ENCODE measurements at regions of chr1 and their contacts with region 1.

Region 1: DNA sequence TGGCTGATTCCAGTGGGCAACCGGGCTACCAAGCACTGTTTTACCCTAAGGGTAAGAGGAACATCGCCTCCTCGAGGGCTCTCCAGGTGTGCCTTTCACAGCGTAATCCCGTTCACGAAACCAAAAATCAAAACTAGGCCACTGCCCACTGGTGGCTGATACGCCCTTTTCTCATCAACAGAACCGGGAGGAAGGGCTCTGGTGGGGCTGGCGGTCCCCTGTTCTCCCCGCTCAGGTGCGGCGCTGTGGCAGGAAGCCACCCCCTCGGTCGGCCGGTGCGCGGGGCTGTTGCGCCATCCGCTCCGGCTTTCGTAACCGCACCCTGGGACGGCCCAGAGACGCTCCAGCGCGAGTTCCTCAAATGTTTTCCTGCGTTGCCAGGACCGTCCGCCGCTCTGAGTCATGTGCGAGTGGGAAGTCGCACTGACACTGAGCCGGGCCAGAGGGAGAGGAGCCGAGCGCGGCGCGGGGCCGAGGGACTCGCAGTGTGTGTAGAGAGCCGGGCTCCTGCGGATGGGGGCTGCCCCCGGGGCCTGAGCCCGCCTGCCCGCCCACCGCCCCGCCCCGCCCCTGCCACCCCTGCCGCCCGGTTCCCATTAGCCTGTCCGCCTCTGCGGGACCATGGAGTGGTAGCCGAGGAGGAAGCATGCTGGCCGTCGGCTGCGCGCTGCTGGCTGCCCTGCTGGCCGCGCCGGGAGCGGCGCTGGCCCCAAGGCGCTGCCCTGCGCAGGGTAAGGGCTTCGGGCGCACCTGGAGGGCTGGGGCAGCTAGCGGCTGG is at the start of gene IL6R:
- DNase-seq: peak; percentile 63 to 83 (median 77)
- ATAC-seq: peak; percentile 70
- H3K4me3 ChIP-seq: peak within 1 kb of the TSS; percentile 72
- H3K4me3 Mint-ChIP-seq: peak within 1 kb of the TSS; percentile 88 to 98 (median 96)
- H3K27ac ChIP-seq: peak within 1 kb of the TSS; percentile 75
- H3K27ac Mint-ChIP-seq: peak within 1 kb of the TSS; percentile 77 to 99 (median 95)
- H3K4me1 ChIP-seq: peaks cover 51 to 68% of the 10 kb centered on the region in 2 donors
- H3K4me1 Mint-ChIP-seq: peaks cover 50 to 75% (median 68%) of the 10 kb centered on the region in 7 donors
- H3K27me3 ChIP-seq: no peaks in the 10 kb centered on the region
- H3K27me3 Mint-ChIP-seq: peaks cover 0 to 4% (median 0%) of the 10 kb centered on the region in 5 donors
- total RNA-seq, gene IL6R: 5.2 to 91.6 (median 85.6) TPM

Region 2: DNA sequence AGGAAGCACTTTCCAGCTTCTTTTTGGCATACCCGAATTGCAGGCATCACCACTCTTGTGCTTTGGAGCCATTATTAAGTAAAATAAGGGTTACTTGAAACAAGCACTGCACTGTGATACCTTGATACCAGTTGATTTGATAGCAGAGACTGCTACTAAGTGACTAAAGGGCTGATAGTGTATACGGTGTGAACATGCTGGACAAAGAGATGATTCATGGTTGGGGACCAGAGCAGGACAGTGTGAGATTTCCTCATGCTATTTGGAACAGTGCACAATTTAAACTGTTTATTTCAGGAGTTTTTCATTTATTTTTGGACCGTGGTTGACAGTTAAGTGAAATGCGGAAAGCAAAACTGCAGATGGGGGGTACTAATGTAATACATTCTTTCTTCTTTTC is 404.8 kb before region 1 on chr1:
- CTCF ChIA-PET with region 1: no interaction called
- POLR2A ChIA-PET with region 1: no interaction called
- intact Hi-C with region 1: no loop called
- DNase-seq: no peak
- ATAC-seq: no peak
- H3K4me3 ChIP-seq: no peak overlapping the region
- H3K4me3 Mint-ChIP-seq: no peak overlapping the region
- H3K27ac ChIP-seq: no peak overlapping the region
- H3K27ac Mint-ChIP-seq: no peak overlapping the region
- H3K4me1 ChIP-seq: no peaks in the 10 kb centered on the region
- H3K4me1 Mint-ChIP-seq: peaks cover 0 to 4% (median 3%) of the 10 kb centered on the region in 7 donors
- H3K27me3 ChIP-seq: no peaks in the 10 kb centered on the region
- H3K27me3 Mint-ChIP-seq: no peaks in the 10 kb centered on the region

Region 3: GRCh38 chr1:154335025-154335714 is 70.0 kb before region 1 on chr1:
- CTCF ChIA-PET with region 1: interaction called, 21 read pairs
- POLR2A ChIA-PET with region 1: interaction called, 7 read pairs
- intact Hi-C with region 1: no loop called
- DNase-seq: peak; percentile 74 to 91 (median 87)
- ATAC-seq: peak; percentile 99
- H3K4me3 ChIP-seq: peak overlapping the region; percentile 23
- H3K4me3 Mint-ChIP-seq: peak overlapping the region; percentile 60 to 85 (median 72)
- H3K27ac ChIP-seq: peak overlapping the region; percentile 68
- H3K27ac Mint-ChIP-seq: peak overlapping the region; percentile 87 to 97 (median 95)
- H3K4me1 ChIP-seq: peaks cover 73% of the 10 kb centered on the region in 2 donors
- H3K4me1 Mint-ChIP-seq: peaks cover 50 to 88% (median 77%) of the 10 kb centered on the region in 7 donors
- H3K27me3 ChIP-seq: no peaks in the 10 kb centered on the region
- H3K27me3 Mint-ChIP-seq: no peaks in the 10 kb centered on the region

Region 4: DNA sequence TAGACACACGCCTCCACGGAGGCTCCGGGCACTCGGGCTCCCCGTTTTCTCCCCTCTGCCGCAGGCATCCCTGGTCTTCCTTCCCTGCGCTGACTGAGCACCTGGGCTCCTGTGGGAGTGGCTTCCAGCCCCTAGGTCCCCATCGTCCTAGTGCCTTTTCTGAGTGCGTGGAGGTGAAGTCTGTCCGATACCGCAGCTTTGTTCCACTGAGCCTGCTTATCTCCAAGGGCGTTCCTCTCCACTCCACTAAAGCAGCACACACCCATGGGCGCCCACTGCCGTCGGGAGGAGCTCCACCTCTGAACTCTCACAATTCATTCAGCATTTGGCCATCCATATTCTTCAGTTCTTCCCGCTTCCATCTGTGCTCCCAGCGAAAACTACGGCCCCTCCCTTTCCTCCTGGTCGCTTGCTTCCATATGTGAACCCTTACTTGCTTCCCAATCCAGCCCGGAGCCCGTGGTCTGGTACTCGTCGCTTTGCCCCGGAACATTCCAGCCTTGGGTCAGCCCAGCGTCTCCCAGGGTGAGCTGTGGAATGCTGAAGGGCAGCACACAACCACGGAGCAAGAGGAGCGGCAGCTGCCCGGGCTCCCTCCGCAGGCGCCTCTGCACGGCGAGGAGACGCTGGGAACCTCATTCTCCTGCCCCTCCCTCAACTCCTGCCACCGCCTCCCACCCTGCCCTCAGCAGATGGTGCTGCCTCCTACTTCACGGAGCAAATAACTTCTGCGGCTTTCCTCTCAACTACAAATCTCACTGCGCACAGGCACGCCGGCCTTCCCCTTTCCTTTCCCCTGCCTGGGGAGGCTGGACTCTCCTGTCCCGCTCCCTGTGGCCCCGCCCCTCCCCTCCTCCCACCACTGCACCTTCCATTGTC is 52.4 kb before region 1 on chr1:
- CTCF ChIA-PET with region 1: interaction called, 28 read pairs
- POLR2A ChIA-PET with region 1: interaction called, 26 read pairs
- intact Hi-C with region 1: loop called (anchors 1 to 5 kb)
- DNase-seq: peak in 8 of 9 donors; percentile 45 to 58 (median 52)
- ATAC-seq: peak; percentile 84
- H3K4me3 ChIP-seq: peak overlapping the region; percentile 79
- H3K4me3 Mint-ChIP-seq: peak overlapping the region; percentile 76 to 98 (median 91)
- H3K27ac ChIP-seq: peak overlapping the region; percentile 74
- H3K27ac Mint-ChIP-seq: peak overlapping the region; percentile 66 to 97 (median 88)
- H3K4me1 ChIP-seq: peaks cover 13 to 32% of the 10 kb centered on the region in 2 donors
- H3K4me1 Mint-ChIP-seq: peaks cover 29 to 64% (median 48%) of the 10 kb centered on the region in 7 donors
- H3K27me3 ChIP-seq: no peaks in the 10 kb centered on the region
- H3K27me3 Mint-ChIP-seq: peaks cover 0 to 2% (median 0%) of the 10 kb centered on the region in 5 donors

Region 5: GRCh38 chr1:154419620-154420571 is 14.7 kb after region 1 on chr1:
- CTCF ChIA-PET with region 1: interaction called, 13 read pairs
- POLR2A ChIA-PET with region 1: interaction called, 159 read pairs
- intact Hi-C with region 1: loop called in 1 of 2 experiments (anchors 1 kb)
- DNase-seq: peak in 7 of 9 donors; percentile 40 to 66 (median 55)
- ATAC-seq: peak; percentile 84
- H3K4me3 ChIP-seq: peak overlapping the region; percentile 40
- H3K4me3 Mint-ChIP-seq: peak overlapping the region; percentile 70 to 86 (median 78)
- H3K27ac ChIP-seq: peak overlapping the region; percentile 76
- H3K27ac Mint-ChIP-seq: peak overlapping the region; percentile 76 to 97 (median 93)
- H3K4me1 ChIP-seq: peaks cover 0 to 78% of the 10 kb centered on the region in 2 donors
- H3K4me1 Mint-ChIP-seq: peaks cover 33 to 99% (median 89%) of the 10 kb centered on the region in 7 donors
- H3K27me3 ChIP-seq: no peaks in the 10 kb centered on the region
- H3K27me3 Mint-ChIP-seq: no peaks in the 10 kb centered on the region

Region 6: DNA sequence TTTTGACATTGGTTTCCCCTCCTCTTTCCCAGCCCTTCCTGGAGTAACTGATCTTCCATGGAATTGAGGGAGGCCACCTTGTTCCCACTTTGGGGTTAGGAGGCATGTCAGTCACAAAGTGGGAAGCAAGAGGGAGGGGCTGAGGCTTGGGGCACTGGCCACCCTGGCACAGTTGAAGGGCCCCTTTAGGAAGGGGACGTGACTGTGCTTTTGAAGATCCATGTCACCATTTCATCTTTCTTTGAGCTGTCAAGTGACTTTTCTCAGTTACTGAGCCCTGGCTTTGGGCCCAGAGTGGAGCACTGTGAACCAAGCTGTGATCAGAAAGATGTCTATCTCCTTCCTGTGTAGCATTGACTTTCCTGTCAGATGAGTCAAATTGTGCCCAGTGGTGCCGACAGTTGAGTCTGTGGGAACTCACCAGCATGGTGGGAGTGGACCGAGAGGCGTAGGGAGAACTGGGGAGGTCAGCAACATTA is 58.4 kb after region 1 on chr1:
- CTCF ChIA-PET with region 1: interaction called, 28 read pairs
- POLR2A ChIA-PET with region 1: interaction called, 84 read pairs
- intact Hi-C with region 1: loop called in 1 of 2 experiments (anchors 1 kb)
- DNase-seq: peak in 8 of 9 donors; percentile 50 to 79 (median 70)
- ATAC-seq: peak; percentile 82
- H3K4me3 ChIP-seq: no peak overlapping the region
- H3K4me3 Mint-ChIP-seq: peak overlapping the region; percentile 58 to 96 (median 80)
- H3K27ac ChIP-seq: peak overlapping the region; percentile 78
- H3K27ac Mint-ChIP-seq: peak overlapping the region; percentile 86 to 96 (median 94)
- H3K4me1 ChIP-seq: peaks cover 38 to 78% of the 10 kb centered on the region in 2 donors
- H3K4me1 Mint-ChIP-seq: peaks cover 58 to 94% (median 81%) of the 10 kb centered on the region in 7 donors
- H3K27me3 ChIP-seq: no peaks in the 10 kb centered on the region
- H3K27me3 Mint-ChIP-seq: no peaks in the 10 kb centered on the region

Region 7: GRCh38 chr1:154955718-154956543 is 550.8 kb after region 1 on chr1 and contains the start of gene PBXIP1:
- CTCF ChIA-PET with region 1: no interaction called
- POLR2A ChIA-PET with region 1: interaction called, 5 read pairs
- intact Hi-C with region 1: loop called in 1 of 2 experiments (anchors 10 kb)
- DNase-seq: peak; percentile 56 to 95 (median 92)
- ATAC-seq: peak; percentile 58
- H3K4me3 ChIP-seq: peak within 1 kb of the TSS; percentile 92
- H3K4me3 Mint-ChIP-seq: peak within 1 kb of the TSS; percentile 92 to 99 (median 98)
- H3K27ac ChIP-seq: peak within 1 kb of the TSS; percentile 96
- H3K27ac Mint-ChIP-seq: peak within 1 kb of the TSS; percentile 97 to 100 (median 99)
- H3K4me1 ChIP-seq: peaks cover 53 to 54% of the 10 kb centered on the region in 2 donors
- H3K4me1 Mint-ChIP-seq: peaks cover 59 to 87% (median 76%) of the 10 kb centered on the region in 7 donors
- H3K27me3 ChIP-seq: no peaks in the 10 kb centered on the region
- H3K27me3 Mint-ChIP-seq: no peaks in the 10 kb centered on the region
- total RNA-seq, gene PBXIP1: 107 to 390 (median 383) TPM

Region 8: GRCh38 chr1:154974063-154974807 is 569.1 kb after region 1 on chr1 and contains the start of gene CKS1B:
- CTCF ChIA-PET with region 1: no interaction called
- POLR2A ChIA-PET with region 1: no interaction called
- intact Hi-C with region 1: no loop called
- DNase-seq: peak; percentile 86 to 100 (median 98)
- ATAC-seq: peak; percentile 89
- H3K4me3 ChIP-seq: peak within 1 kb of the TSS; percentile 82
- H3K4me3 Mint-ChIP-seq: no peak within 1 kb of the TSS
- H3K27ac ChIP-seq: peak within 1 kb of the TSS; percentile 94
- H3K27ac Mint-ChIP-seq: no peak within 1 kb of the TSS
- H3K4me1 ChIP-seq: peaks cover 28 to 35% of the 10 kb centered on the region in 2 donors
- H3K4me1 Mint-ChIP-seq: peaks cover 27 to 39% (median 31%) of the 10 kb centered on the region in 7 donors
- H3K27me3 ChIP-seq: no peaks in the 10 kb centered on the region
- H3K27me3 Mint-ChIP-seq: no peaks in the 10 kb centered on the region
- total RNA-seq, gene CKS1B: 8.4 to 105 (median 10.2) TPM